Activated naive CD4-positive, alpha-beta T cell treated with anti-CD3 and anti-CD28 coated beads for 36 hours (primary cell): ENCODE measurements at regions of chr2 and their contacts with region 1.

Region 1: GRCh38 chr2:120312861-120313694 is 32.9 kb upstream of the INHBB start:
- DNase-seq: peak; percentile 92
- H3K4me3 Mint-ChIP-seq: peak overlapping the region; percentile 65
- H3K27ac Mint-ChIP-seq: no peak overlapping the region
- H3K4me1 Mint-ChIP-seq: peaks cover 32% of the 10 kb centered on the region
- H3K27me3 Mint-ChIP-seq: no peaks in the 10 kb centered on the region

Region 2: DNA sequence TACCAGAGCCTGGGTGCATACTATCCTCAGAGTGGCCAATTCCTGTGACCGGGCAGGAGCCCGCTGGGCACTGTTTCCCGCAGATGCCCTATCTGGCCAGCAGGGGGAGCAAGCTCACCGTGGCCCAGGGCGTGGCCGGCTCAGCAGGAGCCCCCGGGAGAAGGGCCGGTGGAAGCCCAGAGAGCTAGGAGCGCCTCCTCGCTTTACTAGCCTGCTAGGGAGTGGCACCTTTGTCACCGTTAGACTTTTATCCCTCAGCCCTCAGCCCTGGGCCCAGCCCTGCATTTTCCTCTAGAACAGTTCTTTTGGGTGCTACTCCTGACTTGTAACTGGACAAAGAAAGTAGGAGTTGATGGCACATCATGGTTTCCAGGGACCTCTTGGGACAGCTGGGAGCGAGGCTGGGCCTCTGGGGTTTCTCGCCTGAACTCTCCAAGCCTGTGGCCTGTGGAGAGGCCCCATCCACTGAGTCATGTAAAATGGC is 610.1 kb before region 1 on chr2:
- CTCF ChIA-PET with region 1: no interaction called
- intact Hi-C with region 1: loop called (anchors 2 kb)
- DNase-seq: peak; percentile 74
- H3K4me3 Mint-ChIP-seq: no peak overlapping the region
- H3K27ac Mint-ChIP-seq: no peak overlapping the region
- H3K4me1 Mint-ChIP-seq: peaks cover 16% of the 10 kb centered on the region
- H3K27me3 Mint-ChIP-seq: no peaks in the 10 kb centered on the region

Region 3: DNA sequence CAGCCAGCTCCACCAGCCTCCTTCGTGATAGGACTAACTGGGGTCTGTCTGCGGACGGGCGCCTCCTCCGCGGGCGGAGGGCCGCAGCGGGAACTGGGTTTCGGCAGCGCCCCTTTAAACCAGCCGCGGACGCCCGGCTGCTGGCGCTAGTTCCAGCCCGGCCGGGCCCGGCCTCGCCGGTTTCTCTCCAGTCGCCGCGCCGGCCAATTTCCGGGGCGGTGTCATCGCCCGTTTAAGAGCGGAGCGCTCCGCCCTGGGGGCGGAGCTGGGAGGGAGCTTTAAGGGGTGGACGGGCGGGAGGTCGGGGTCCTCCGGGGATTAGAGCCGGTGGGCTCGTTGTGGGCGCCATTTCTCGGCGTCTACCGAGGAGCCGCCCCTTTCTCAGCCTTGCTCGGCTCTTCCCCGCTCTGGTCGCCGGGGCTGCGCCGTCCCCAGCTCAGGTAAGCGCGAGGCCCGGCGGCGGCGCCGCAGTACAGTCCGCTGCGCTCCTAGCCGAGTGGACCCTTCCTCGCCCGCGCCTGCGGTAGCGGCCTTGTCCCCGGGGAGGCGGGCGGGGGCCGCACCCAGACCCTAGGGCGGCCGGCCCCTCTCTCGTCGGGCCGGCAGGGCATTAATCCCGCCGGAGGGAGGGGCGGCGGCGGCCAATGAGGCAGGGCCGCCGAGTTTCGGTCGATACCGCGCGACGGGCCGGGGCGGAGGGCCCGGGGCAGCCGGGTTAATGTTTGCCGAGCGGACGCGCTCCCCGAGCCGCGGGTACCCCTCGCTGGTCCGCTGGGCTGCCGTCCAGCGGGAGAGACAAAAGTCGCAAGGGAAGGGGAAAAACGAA is 300.1 kb before region 1 on chr2 and contains the start of gene EPB41L5:
- CTCF ChIA-PET with region 1: interaction called, 4 read pairs
- intact Hi-C with region 1: loop called (anchors 2 kb)
- DNase-seq: peak; percentile 79
- H3K4me3 Mint-ChIP-seq: peak within 1 kb of the TSS; percentile 77
- H3K27ac Mint-ChIP-seq: no peak within 1 kb of the TSS
- H3K4me1 Mint-ChIP-seq: peaks cover 8% of the 10 kb centered on the region
- H3K27me3 Mint-ChIP-seq: no peaks in the 10 kb centered on the region
- total RNA-seq, gene EPB41L5: 2.3 to 2.5 TPM

Region 4: GRCh38 chr2:120231974-120232635 is 81.0 kb before region 1 on chr2:
- CTCF ChIA-PET with region 1: interaction called, 37 read pairs
- intact Hi-C with region 1: loop called (anchors 1 kb)
- DNase-seq: peak; percentile 86
- H3K4me3 Mint-ChIP-seq: peak overlapping the region; percentile 82
- H3K27ac Mint-ChIP-seq: peak overlapping the region; percentile 94
- H3K4me1 Mint-ChIP-seq: peaks cover 47% of the 10 kb centered on the region
- H3K27me3 Mint-ChIP-seq: no peaks in the 10 kb centered on the region

Region 5: DNA sequence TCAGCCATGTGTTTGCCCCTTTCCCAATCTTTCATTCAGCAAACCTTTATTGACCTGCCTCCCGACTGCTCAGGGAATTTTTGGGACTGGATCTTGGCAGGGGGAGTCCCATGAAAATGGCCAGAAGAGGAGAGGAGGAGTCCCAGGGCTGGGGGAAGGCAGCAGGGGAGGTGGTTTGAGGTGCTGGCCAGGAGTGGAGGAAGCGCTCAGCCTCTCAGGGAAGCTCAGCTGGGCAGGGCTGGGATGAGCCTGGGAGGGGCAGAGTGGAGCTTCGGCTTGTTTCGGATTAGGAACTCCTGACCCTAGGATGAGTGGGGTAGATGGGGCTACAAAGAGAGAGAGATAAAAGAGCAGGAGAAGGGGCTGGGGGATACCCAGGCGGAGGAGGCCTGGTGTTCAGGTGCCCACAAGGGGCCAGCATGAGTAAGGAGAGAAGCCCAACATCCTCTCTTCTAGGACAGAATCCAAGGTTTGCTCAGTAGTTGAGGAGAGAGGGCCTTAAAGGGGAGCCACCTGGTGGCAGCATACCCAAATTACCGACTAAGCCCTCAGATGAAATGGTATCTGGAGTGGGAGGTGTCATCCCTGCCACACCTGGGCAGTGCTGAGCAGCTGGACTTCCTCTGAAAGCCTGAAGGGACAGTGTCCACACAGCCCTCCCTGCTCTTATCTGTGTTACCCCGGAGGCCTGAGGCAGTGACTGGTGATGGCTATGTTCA is 124.0 kb after region 1 on chr2:
- CTCF ChIA-PET with region 1: no interaction called
- intact Hi-C with region 1: loop called (anchors 1 kb)
- DNase-seq: peak; percentile 50
- H3K4me3 Mint-ChIP-seq: no peak overlapping the region
- H3K27ac Mint-ChIP-seq: no peak overlapping the region
- H3K4me1 Mint-ChIP-seq: peaks cover 4% of the 10 kb centered on the region
- H3K27me3 Mint-ChIP-seq: peaks cover 10% of the 10 kb centered on the region